IMR-90 (cell line): ENCODE measurements at regions of chr3 and their contacts with region 1.

Region 1: GRCh38 chr3:156943430-156943829 is 117.3 kb downstream of the LEKR1 start:
- DNase-seq: no peak
- ATAC-seq: no peak
- H3K4me3 ChIP-seq: no peak overlapping the region
- H3K27ac ChIP-seq: no peak overlapping the region
- H3K4me1 ChIP-seq: no peaks in the 10 kb centered on the region
- H3K27me3 ChIP-seq: no peaks in the 10 kb centered on the region
- CTCF ChIP-seq: no peak
- POLR2A ChIP-seq: no peak
- RAD21 ChIP-seq: no peak

Region 2: GRCh38 chr3:156691920-156692319 is 251.5 kb before region 1 on chr3:
- CTCF ChIA-PET with region 1: no interaction called
- POLR2A ChIA-PET with region 1: no interaction called
- dilution Hi-C with region 1: no loop called
- in situ Hi-C with region 1: no loop called
- intact Hi-C with region 1: no loop called
- DNase-seq: peak; percentile 89
- ATAC-seq: peak; percentile 64
- H3K4me3 ChIP-seq: no peak overlapping the region
- H3K27ac ChIP-seq: peak overlapping the region; percentile 71; the same call in 1 of the 2 replicates
- H3K4me1 ChIP-seq: peaks cover 32% of the 10 kb centered on the region
- H3K27me3 ChIP-seq: no peaks in the 10 kb centered on the region
- CTCF ChIP-seq: no peak
- POLR2A ChIP-seq: peak; percentile 21; the same call in 1 of the 2 replicates
- RAD21 ChIP-seq: no peak

Region 3: GRCh38 chr3:156816800-156817645 is 126.4 kb before region 1 on chr3:
- CTCF ChIA-PET with region 1: no interaction called
- POLR2A ChIA-PET with region 1: no interaction called
- dilution Hi-C with region 1: no loop called
- in situ Hi-C with region 1: no loop called
- intact Hi-C with region 1: no loop called
- DNase-seq: peak; percentile 90
- ATAC-seq: peak; percentile 70
- H3K4me3 ChIP-seq: peak overlapping the region; percentile 44
- H3K27ac ChIP-seq: peak overlapping the region; percentile 96
- H3K4me1 ChIP-seq: peaks cover 24% of the 10 kb centered on the region
- H3K27me3 ChIP-seq: no peaks in the 10 kb centered on the region
- CTCF ChIP-seq: peak; percentile 30
- POLR2A ChIP-seq: peak; percentile 69; the same call in 1 of the 2 replicates
- RAD21 ChIP-seq: peak; percentile 37; the same call in 1 of the 2 replicates

Region 4: GRCh38 chr3:156888176-156888575 is 55.3 kb before region 1 on chr3:
- CTCF ChIA-PET with region 1: no interaction called
- POLR2A ChIA-PET with region 1: no interaction called
- dilution Hi-C with region 1: no loop called
- in situ Hi-C with region 1: no loop called
- intact Hi-C with region 1: no loop called
- DNase-seq: no peak
- ATAC-seq: no peak
- H3K4me3 ChIP-seq: no peak overlapping the region
- H3K27ac ChIP-seq: no peak overlapping the region
- H3K4me1 ChIP-seq: no peaks in the 10 kb centered on the region
- H3K27me3 ChIP-seq: no peaks in the 10 kb centered on the region
- CTCF ChIP-seq: no peak
- POLR2A ChIP-seq: no peak
- RAD21 ChIP-seq: no peak

Region 5: DNA sequence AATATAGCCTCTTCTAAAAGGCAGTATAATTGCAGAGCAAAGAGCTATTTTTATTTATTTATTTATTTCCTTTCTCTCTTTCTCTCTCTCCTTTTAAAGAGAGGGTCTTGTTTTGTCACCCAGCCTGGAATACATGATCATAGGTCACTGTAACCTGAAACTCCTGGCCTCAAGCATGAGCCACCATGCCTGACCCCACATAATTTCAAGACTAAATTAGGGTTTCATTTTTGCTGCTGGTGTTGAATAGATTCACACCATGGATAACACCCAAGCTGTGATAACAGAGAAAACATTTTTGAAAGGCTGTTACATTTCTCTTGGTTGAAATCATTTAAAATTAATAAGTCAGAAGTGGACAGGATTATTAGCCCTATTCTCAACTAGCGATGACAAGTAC is 14.3 kb after region 1 on chr3:
- CTCF ChIA-PET with region 1: no interaction called
- POLR2A ChIA-PET with region 1: no interaction called
- dilution Hi-C with region 1: no loop called
- in situ Hi-C with region 1: no loop called
- intact Hi-C with region 1: loop called (anchors 2 kb)
- DNase-seq: no peak
- ATAC-seq: no peak
- H3K4me3 ChIP-seq: no peak overlapping the region
- H3K27ac ChIP-seq: no peak overlapping the region
- H3K4me1 ChIP-seq: no peaks in the 10 kb centered on the region
- H3K27me3 ChIP-seq: peaks cover 1% of the 10 kb centered on the region; the same call in 1 of the 2 replicates
- CTCF ChIP-seq: no peak
- POLR2A ChIP-seq: no peak
- RAD21 ChIP-seq: no peak